ENCODE measurements at regions of chr5 and their contacts with region 1.

Region 1: GRCh38 chr5:131109540-131110255 is 55.4 kb downstream of the HINT1 start:
- DNase-seq: peak; percentile 18 to 50 (median 32)
- H3K4me3 ChIP-seq: no peak overlapping the region
- H3K4me3 Mint-ChIP-seq: no peak overlapping the region
- H3K27ac ChIP-seq: no peak overlapping the region
- H3K27ac Mint-ChIP-seq: no peak overlapping the region
- H3K4me1 ChIP-seq: peaks cover 21 to 27% of the 10 kb centered on the region in 2 donors
- H3K4me1 Mint-ChIP-seq: peaks cover 28% of the 10 kb centered on the region
- H3K27me3 ChIP-seq: no peaks in the 10 kb centered on the region
- H3K27me3 Mint-ChIP-seq: no peaks in the 10 kb centered on the region
- CTCF ChIP-seq: peak; percentile 80

Region 2: GRCh38 chr5:129904102-129904666 is 1205.5 kb before region 1 on chr5 and contains the start of gene CHSY3:
- intact Hi-C with region 1: loop called in 1 of 2 experiments (anchors 10 kb)
- DNase-seq: peak in 2 of 3 donors; percentile 4 to 13
- H3K4me3 ChIP-seq: peak within 1 kb of the TSS; percentile 9 to 64 (median 32)
- H3K4me3 Mint-ChIP-seq: peak within 1 kb of the TSS; percentile 61 to 89
- H3K27ac ChIP-seq: no peak within 1 kb of the TSS
- H3K27ac Mint-ChIP-seq: no peak within 1 kb of the TSS
- H3K4me1 ChIP-seq: peaks cover 9 to 16% of the 10 kb centered on the region in 2 donors
- H3K4me1 Mint-ChIP-seq: peaks cover 14% of the 10 kb centered on the region
- H3K27me3 ChIP-seq: peaks cover 59 to 76% of the 10 kb centered on the region in 2 donors
- H3K27me3 Mint-ChIP-seq: peaks cover 53 to 70% (median 54%) of the 10 kb centered on the region in 3 donors
- CTCF ChIP-seq: no peak
- polyA plus RNA-seq, gene CHSY3: not detected

Region 3: DNA sequence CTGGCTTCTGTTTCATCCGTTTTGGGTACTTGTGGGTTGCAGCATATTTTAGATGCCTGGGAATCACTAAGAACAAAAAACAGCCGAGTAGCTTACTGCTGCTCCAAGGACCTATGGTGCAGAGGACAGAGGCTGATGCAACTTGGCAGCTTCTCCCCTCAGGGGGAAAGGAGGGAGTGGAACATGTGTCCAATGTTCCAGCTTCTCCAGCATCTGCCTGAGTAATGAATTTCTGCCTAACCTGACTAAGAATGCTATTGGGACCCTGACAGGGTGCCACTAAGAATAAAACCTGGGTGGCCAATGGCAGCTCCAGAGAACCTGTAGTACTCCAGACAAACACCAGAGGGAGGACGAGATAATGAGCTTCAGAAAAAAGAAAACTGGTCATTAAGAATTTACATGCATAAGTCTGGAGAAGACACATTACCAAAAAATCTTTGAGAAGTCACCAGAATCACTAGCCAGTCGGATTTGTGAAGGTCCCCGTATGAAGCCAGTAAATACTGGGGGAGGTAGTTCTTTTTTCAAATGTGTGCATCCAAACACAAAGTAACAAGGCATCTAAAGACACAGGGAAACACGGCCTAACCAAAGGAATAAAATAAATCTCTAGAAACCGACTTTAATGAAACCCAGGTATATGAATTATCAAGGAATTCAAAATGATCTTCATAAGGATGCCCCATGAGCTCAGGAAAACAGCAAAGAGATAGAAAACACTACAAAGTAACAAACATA is 238.2 kb before region 1 on chr5:
- intact Hi-C with region 1: loop called (anchors 5 to 10 kb)
- DNase-seq: peak; percentile 7 to 31 (median 31)
- H3K4me3 ChIP-seq: no peak overlapping the region
- H3K4me3 Mint-ChIP-seq: no peak overlapping the region
- H3K27ac ChIP-seq: no peak overlapping the region
- H3K27ac Mint-ChIP-seq: no peak overlapping the region
- H3K4me1 ChIP-seq: no peaks in the 10 kb centered on the region
- H3K4me1 Mint-ChIP-seq: no peaks in the 10 kb centered on the region
- H3K27me3 ChIP-seq: no peaks in the 10 kb centered on the region
- H3K27me3 Mint-ChIP-seq: peaks cover 0 to 3% (median 0%) of the 10 kb centered on the region in 3 donors
- CTCF ChIP-seq: peak; percentile 85

Region 4: GRCh38 chr5:131022811-131023497 is 86.7 kb before region 1 on chr5:
- intact Hi-C with region 1: no loop called
- DNase-seq: no peak
- H3K4me3 ChIP-seq: no peak overlapping the region
- H3K4me3 Mint-ChIP-seq: no peak overlapping the region
- H3K27ac ChIP-seq: peak overlapping the region in 1 of 2 donors; percentile 26
- H3K27ac Mint-ChIP-seq: no peak overlapping the region
- H3K4me1 ChIP-seq: peaks cover 12 to 20% of the 10 kb centered on the region in 2 donors
- H3K4me1 Mint-ChIP-seq: peaks cover 18% of the 10 kb centered on the region
- H3K27me3 ChIP-seq: no peaks in the 10 kb centered on the region
- H3K27me3 Mint-ChIP-seq: no peaks in the 10 kb centered on the region
- CTCF ChIP-seq: no peak

Region 5: DNA sequence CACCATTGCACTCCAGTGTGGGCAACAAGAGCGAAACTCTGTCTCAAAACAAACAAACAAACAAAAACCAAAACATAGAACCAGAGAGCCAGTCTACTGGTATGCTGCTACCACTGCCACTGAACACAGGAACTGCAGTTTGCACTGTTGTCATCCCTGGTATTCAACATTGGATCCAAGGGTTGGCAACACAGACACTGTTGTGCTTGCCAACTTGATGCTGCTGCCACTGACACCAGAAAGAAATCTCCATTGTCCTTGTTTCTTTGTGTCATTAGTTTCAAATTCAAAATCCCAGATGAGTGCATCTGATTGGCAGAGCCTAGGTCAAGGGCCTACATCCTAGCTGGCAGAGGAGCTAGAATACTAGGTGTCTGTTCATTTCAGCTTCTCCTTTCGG is 39.1 kb after region 1 on chr5:
- intact Hi-C with region 1: no loop called
- DNase-seq: no peak
- H3K4me3 ChIP-seq: no peak overlapping the region
- H3K4me3 Mint-ChIP-seq: no peak overlapping the region
- H3K27ac ChIP-seq: no peak overlapping the region
- H3K27ac Mint-ChIP-seq: no peak overlapping the region
- H3K4me1 ChIP-seq: no peaks in the 10 kb centered on the region
- H3K4me1 Mint-ChIP-seq: no peaks in the 10 kb centered on the region
- H3K27me3 ChIP-seq: no peaks in the 10 kb centered on the region
- H3K27me3 Mint-ChIP-seq: peaks cover 0 to 2% (median 1%) of the 10 kb centered on the region in 3 donors
- CTCF ChIP-seq: no peak

Region 6: DNA sequence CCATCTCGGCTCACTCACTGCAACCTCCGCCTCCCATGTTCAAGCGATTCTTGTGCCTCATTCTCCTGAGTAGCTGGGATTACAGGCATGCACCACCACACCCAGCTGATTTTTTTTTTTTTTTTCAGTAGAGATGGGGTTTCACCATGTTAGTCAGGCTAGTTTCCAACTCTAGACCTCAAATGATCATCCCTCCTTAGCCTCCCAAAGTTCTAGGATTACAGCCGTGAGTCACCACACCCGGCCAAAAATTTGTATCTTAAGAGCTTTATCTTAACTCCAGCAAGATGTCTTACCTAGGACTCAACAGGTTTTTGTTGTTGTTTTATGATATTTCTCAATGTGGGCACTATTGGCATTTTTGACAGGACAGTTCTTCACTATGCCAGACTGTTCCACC is 88.9 kb after region 1 on chr5:
- intact Hi-C with region 1: no loop called
- DNase-seq: no peak
- H3K4me3 ChIP-seq: no peak overlapping the region
- H3K4me3 Mint-ChIP-seq: no peak overlapping the region
- H3K27ac ChIP-seq: no peak overlapping the region
- H3K27ac Mint-ChIP-seq: no peak overlapping the region
- H3K4me1 ChIP-seq: no peaks in the 10 kb centered on the region
- H3K4me1 Mint-ChIP-seq: no peaks in the 10 kb centered on the region
- H3K27me3 ChIP-seq: no peaks in the 10 kb centered on the region
- H3K27me3 Mint-ChIP-seq: no peaks in the 10 kb centered on the region
- CTCF ChIP-seq: no peak